ENCODE measurements at regions of chr7 and their contacts with region 1.

Region 1: DNA sequence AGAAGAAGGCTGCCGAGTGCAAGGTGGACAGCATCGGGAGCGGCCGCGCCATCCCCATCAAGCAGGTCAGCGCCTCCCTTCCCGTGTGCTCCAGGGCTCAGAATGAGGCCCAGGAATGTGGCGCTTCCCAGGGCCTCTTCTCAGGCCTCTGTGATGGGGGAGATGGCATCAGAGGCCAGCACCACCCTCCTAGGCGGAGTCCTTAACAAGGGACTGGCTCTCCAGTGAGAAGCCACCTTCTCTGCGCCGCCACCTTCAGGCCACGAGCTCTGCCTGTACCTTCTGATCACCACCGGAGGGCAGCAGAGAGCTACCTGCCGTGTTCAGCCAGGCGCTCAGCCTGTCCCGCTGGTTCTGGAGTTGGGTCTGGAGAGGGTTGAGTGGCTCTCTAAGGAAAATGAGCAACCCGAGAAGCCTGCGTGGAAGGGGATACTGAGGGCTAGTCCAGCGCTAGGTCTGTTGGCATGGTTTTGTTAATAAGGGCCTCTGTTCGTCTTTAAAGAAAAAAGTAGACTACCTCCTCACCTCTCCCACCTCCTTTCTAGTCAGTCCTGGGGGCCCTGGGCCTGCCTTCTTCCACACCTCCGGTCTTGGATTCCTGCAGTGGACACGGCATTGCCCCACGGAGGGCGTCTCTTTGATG is 37.7 kb downstream of the AGAP3 start:
- DNase-seq: peak; percentile 90 to 93
- H3K4me3 ChIP-seq: no peak overlapping the region
- H3K27ac ChIP-seq: no peak overlapping the region
- H3K4me1 ChIP-seq: peaks cover 16% of the 10 kb centered on the region in 2 donors
- H3K27me3 ChIP-seq: no peaks in the 10 kb centered on the region
- CTCF ChIP-seq: peak; percentile 95 to 99 (median 98)
- POLR2A ChIP-seq: no peak

Region 2: DNA sequence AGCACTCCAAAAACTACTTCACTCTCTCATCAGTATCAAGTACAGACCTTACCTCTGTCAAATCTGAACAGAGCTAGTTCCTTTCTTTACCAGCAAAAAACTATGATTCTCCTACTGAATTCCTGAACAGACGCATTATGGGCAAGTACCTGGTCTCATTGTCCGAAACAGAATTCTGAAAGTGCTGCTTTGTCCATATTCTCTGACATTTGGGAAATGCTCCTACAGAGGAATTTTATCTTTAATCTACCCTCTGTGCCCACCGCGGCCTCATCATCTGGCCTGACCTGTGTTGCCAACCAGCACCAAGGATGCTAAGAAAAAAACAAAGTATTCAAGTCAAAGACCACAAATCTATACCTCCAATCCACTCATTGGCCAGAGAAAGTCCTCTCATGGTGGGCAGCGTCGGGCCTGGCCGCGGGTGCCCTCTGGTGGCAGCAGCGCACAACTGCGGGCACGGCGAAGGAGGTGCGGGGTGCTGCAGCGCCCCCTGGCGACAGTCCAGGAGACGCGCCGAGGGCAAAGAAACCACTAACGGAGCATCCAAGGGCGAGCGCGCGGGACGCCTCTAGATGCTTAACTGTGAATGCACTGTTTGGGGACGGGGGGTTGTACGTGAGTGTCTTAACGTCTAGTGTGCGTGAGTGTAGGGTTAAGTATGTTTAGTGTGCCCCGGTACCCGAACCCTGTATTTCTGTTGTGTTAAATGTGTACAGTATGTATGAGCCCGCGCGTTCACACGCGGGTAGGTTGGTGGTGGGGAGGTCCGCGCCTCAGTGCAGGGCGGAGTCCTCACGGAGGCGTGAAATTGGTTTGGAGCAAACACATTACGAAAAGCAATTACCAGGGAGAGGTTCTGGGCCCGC is 48.6 kb after region 1 on chr7:
- intact Hi-C with region 1: loop called (anchors 2 kb)
- DNase-seq: peak; percentile 72 to 77
- H3K4me3 ChIP-seq: no peak overlapping the region
- H3K27ac ChIP-seq: no peak overlapping the region
- H3K4me1 ChIP-seq: peaks cover 0 to 9% of the 10 kb centered on the region in 2 donors
- H3K27me3 ChIP-seq: no peaks in the 10 kb centered on the region
- CTCF ChIP-seq: peak; percentile 1 to 100 (median 100)
- POLR2A ChIP-seq: no peak

Region 3: DNA sequence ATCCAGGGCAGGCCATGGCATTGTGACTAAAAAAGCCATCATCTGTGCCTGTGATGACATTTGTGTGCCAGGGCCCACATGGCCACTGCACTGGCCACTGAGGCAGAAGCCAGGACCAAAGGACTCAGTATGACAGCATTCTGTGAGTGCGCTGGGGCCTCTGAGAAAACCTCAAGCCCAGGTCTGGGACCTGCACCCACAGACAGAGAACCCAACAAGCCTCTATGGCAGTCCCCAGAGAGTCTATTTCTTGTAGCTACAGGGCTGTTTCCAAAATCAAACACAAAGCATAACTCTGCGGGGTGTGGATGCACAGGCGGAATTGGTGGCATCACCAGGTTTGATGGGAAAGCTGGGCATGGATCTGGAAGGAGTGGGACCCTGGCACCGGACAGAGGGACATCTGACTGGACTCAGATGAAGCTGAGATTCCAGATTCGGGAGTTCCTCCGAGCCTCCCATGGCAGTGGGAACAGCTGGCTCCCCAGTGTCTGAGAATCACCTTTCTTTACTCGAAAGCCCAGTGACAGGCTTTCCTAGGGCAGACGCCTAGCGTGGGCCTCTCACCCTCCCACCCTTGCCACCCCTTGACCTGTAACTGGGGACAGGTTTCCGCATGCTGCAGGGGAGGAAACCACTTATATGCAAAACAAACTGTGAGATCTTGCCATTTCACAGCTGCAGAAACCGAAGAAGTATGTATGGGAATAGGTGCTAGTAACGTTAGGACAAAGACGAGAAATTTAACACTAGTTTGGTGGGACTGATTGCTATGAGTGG is 466.3 kb after region 1 on chr7:
- intact Hi-C with region 1: no loop called
- DNase-seq: no peak
- H3K4me3 ChIP-seq: no peak overlapping the region
- H3K27ac ChIP-seq: no peak overlapping the region
- H3K4me1 ChIP-seq: peaks cover 7 to 9% of the 10 kb centered on the region in 2 donors
- H3K27me3 ChIP-seq: no peaks in the 10 kb centered on the region
- CTCF ChIP-seq: no peak
- POLR2A ChIP-seq: no peak